ENCODE measurements at regions of chr2 and their contacts with region 1.

Region 1: GRCh38 chr2:102050854-102051391 is 59.2 kb downstream of the IL1R2 start:
- DNase-seq: peak; percentile 89 to 92
- ATAC-seq: peak; percentile 81
- H3K4me3 ChIP-seq: no peak overlapping the region
- H3K27ac ChIP-seq: peak overlapping the region in 1 of 2 donors; percentile 88
- H3K4me1 ChIP-seq: peaks cover 3 to 5% of the 10 kb centered on the region in 2 donors
- H3K27me3 ChIP-seq: no peaks in the 10 kb centered on the region

Region 2: GRCh38 chr2:102063941-102064678 is 13.2 kb after region 1 on chr2:
- intact Hi-C with region 1: loop called in 1 of 2 experiments (anchors 1 kb)
- DNase-seq: peak; percentile 93 to 95
- ATAC-seq: peak; percentile 94
- H3K4me3 ChIP-seq: no peak overlapping the region
- H3K27ac ChIP-seq: peak overlapping the region; percentile 95 to 100
- H3K4me1 ChIP-seq: peaks cover 2% of the 10 kb centered on the region in 2 donors
- H3K27me3 ChIP-seq: no peaks in the 10 kb centered on the region

Region 3: DNA sequence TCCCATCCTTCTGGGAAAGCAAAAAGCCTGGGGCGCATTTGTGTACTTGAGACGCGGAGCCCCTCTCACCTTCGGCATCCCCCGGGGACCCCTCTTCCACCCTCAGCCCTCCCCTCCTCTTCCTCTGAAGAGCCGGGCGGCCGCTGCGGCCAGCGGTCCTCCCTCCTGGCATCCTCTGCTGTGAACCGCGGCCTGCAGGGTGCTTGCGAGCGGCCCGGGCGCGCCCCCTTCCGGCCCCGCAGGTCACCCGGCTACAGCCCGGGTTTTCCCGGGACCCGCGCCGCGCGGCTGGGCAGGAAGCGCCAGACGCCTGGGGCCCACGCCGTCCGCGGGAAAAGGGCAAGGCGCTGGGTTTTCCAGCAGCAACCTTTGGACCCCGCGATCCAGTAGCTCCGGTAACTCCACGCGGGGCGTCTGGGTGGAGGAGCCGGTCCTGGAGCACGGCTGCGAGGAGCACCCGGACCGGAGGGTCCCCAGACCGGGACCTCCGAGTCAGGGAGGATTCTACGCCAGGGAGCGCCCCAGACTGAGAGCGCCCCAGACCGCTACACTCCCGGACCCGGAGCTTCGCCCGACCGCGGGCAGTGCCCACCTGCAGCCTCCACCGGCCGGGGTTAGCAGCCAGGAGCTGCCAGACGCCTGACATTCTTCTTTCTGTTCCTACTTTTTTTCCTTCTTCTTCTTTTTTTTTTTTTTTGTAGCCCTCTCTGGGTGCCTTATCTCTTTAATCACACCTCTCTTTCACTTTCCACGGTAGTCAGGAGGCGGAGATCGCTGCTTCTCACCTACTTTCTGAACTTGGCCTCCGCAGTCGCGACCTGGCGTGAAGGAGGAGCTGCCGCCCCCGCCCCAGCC is 304.8 kb after region 1 on chr2 and contains the start of gene IL18R1:
- intact Hi-C with region 1: no loop called
- DNase-seq: peak; percentile 86 to 93
- ATAC-seq: peak; percentile 97
- H3K4me3 ChIP-seq: peak within 1 kb of the TSS; percentile 39 to 74
- H3K27ac ChIP-seq: no peak within 1 kb of the TSS
- H3K4me1 ChIP-seq: no peaks in the 10 kb centered on the region
- H3K27me3 ChIP-seq: no peaks in the 10 kb centered on the region
- total RNA-seq, gene IL18R1: 8.0 to 11.0 TPM